Mammary epithelial cell (primary cell): ENCODE measurements at regions of chr6 and their contacts with region 1.

Region 1: DNA sequence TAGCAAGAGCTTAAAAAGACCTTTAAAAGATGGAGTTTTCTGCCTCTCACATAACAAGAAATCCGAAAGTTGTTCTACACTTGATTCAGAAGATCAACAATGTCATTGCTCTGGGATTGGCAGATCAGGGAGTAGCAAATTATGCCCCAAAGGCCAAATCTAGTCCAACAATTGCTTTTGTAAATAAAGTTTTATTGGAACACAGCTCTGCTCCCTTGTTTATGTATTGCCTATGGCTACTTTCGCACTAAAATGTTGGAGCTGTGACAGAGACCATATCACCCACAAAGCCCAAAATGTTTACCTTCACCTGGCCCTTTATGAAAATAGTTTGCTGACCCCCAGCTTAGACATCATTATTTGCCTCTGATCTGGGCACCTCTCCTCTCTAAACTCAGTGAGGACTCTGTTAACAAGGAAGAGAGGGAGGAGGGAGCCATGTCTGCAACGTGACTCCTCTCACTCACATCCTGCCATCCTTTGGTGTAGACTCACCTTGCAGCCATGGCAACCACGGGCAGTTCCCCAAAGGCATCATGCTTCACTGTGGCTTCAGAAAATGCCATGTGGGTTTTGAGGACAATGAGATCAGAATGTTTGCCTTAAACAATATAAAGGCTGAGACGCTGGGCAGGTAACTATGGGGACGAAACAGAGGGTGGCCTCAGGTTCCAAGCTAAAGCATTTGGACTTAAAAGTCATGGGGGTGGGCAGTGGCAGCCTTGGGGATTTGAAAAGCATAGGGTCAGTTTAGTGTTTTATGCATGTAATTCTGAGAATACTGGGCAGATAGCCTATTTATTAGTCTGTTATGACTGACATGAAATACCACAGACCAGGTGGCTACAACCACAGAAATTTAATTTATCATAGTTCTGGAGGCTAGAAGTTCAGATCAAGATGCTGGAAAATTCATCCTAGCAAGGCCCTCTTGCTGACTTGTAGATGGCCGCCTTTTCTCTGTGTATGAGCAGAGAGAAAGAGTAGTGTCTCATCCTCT is 149.7 kb upstream of the TNFAIP3 start:
- DNase-seq: peak; percentile 98
- H3K4me3 ChIP-seq: no peak overlapping the region
- H3K27ac ChIP-seq: peak overlapping the region; percentile 88
- H3K4me1 ChIP-seq: peaks cover 18% of the 10 kb centered on the region
- H3K27me3 ChIP-seq: no peaks in the 10 kb centered on the region
- CTCF ChIP-seq: no peak

Region 2: GRCh38 chr6:137497721-137498463 is 219.5 kb before region 1 on chr6:
- CTCF ChIA-PET with region 1: no interaction called
- dilution Hi-C with region 1: no loop called
- in situ Hi-C with region 1: no loop called
- intact Hi-C with region 1: no loop called
- DNase-seq: no peak
- H3K4me3 ChIP-seq: no peak overlapping the region
- H3K27ac ChIP-seq: no peak overlapping the region
- H3K4me1 ChIP-seq: peaks cover 6% of the 10 kb centered on the region
- H3K27me3 ChIP-seq: peaks cover 62% of the 10 kb centered on the region
- CTCF ChIP-seq: no peak

Region 3: GRCh38 chr6:137728385-137729349 is 11.3 kb after region 1 on chr6:
- CTCF ChIA-PET with region 1: no interaction called
- dilution Hi-C with region 1: no loop called
- in situ Hi-C with region 1: no loop called
- intact Hi-C with region 1: loop called (anchors 1 kb)
- DNase-seq: peak; percentile 99
- H3K4me3 ChIP-seq: no peak overlapping the region
- H3K27ac ChIP-seq: peak overlapping the region; percentile 91
- H3K4me1 ChIP-seq: peaks cover 51% of the 10 kb centered on the region
- H3K27me3 ChIP-seq: no peaks in the 10 kb centered on the region
- CTCF ChIP-seq: no peak